ENCODE measurements at regions of chr5 and their contacts with region 1.

Region 1: GRCh38 chr5:122515709-122516431 is 203.8 kb downstream of the SNCAIP start:
- DNase-seq: no peak
- H3K4me3 ChIP-seq: no peak overlapping the region
- H3K27ac ChIP-seq: no peak overlapping the region
- H3K4me1 ChIP-seq: no peaks in the 10 kb centered on the region
- H3K27me3 ChIP-seq: peaks cover 4% of the 10 kb centered on the region
- CTCF ChIP-seq: peak; percentile 71

Region 2: GRCh38 chr5:122845229-122846050 is 329.6 kb after region 1 on chr5 and contains the start of gene SNX24:
- intact Hi-C with region 1: no loop called
- DNase-seq: peak; percentile 85
- H3K4me3 ChIP-seq: peak within 1 kb of the TSS; percentile 90
- H3K27ac ChIP-seq: peak within 1 kb of the TSS; percentile 94
- H3K4me1 ChIP-seq: peaks cover 29% of the 10 kb centered on the region
- H3K27me3 ChIP-seq: no peaks in the 10 kb centered on the region
- CTCF ChIP-seq: no peak
- total RNA-seq, gene SNX24: 16.0 TPM

Region 3: DNA sequence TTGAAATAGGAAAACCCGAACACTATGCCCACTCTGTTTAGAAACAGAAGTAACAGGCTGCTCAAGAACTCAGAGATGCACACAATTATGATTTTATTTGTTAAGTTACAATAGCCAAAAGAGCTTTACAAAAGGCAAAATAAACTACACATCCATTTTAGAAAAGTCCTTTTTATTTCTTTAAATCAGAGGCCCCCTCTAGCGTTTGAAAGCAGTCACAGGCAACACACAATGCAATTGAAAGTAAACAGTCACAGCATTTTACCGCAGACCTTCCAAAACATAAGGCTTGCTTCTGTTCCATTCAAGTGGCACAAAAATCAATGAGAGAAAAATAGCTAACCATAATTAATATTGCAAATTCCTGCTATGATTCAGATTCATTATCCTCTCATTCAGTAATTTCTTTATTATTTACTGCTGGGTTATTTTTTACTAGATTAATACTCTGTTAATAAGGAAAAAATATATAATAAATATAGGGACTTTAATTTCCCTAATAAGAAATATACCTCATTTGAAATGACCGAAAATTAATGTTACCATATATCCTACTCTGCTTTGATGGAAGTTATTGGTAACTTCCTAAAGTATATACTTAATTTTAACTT is 829.1 kb after region 1 on chr5:
- intact Hi-C with region 1: loop called (anchors 10 kb)
- DNase-seq: no peak
- H3K4me3 ChIP-seq: no peak overlapping the region
- H3K27ac ChIP-seq: no peak overlapping the region
- H3K4me1 ChIP-seq: no peaks in the 10 kb centered on the region
- H3K27me3 ChIP-seq: no peaks in the 10 kb centered on the region
- CTCF ChIP-seq: peak; percentile 76